Esophagus muscularis mucosa (tissue), 4 donors: ENCODE measurements at regions of chr5 and their contacts with region 1.

Region 1: GRCh38 chr5:82641331-82642003 is 363.3 kb upstream of the RPS23 start:
- DNase-seq: peak; percentile 93
- H3K4me3 ChIP-seq: no peak overlapping the region
- H3K27ac ChIP-seq: peak overlapping the region in 1 of 4 donors; percentile 6
- H3K4me1 ChIP-seq: peaks cover 0 to 28% (median 26%) of the 10 kb centered on the region in 4 donors
- H3K27me3 ChIP-seq: no peaks in the 10 kb centered on the region
- CTCF ChIP-seq: peak; percentile 64 to 78 (median 72)
- EP300 ChIP-seq: no peak
- POLR2A ChIP-seq: no peak

Region 2: DNA sequence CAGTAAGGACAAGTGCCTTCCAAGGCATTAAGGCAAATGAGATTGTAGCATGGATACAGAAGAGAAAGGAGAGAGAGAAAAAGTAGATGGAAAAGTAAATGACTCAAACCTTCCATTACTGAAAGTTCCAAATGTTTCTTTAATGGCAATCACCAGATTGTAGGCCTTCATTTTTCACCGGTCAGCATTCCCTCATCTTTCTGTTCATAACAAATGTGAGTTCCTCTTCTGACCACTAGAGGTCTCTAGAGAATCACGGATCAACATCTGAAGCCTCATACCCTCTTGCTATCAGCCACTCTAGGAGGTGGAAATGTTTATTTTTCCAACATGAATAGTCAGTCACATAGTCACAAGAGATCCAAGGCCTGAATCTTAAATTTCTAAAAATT is 289.7 kb before region 1 on chr5:
- intact Hi-C with region 1: loop called (anchors 5 kb)
- DNase-seq: no peak
- H3K4me3 ChIP-seq: no peak overlapping the region
- H3K27ac ChIP-seq: peak overlapping the region in 2 of 4 donors; percentile 27 to 32
- H3K4me1 ChIP-seq: peaks cover 20 to 38% (median 25%) of the 10 kb centered on the region in 4 donors
- H3K27me3 ChIP-seq: no peaks in the 10 kb centered on the region
- CTCF ChIP-seq: peak; percentile 65 to 82 (median 73)
- EP300 ChIP-seq: no peak
- POLR2A ChIP-seq: no peak

Region 3: GRCh38 chr5:82793808-82794419 is 152.4 kb after region 1 on chr5:
- intact Hi-C with region 1: loop called (anchors 5 kb)
- DNase-seq: no peak
- H3K4me3 ChIP-seq: no peak overlapping the region
- H3K27ac ChIP-seq: no peak overlapping the region
- H3K4me1 ChIP-seq: no peaks in the 10 kb centered on the region
- H3K27me3 ChIP-seq: no peaks in the 10 kb centered on the region
- CTCF ChIP-seq: peak; percentile 28 to 69 (median 48)
- EP300 ChIP-seq: no peak
- POLR2A ChIP-seq: no peak

Region 4: GRCh38 chr5:83000428-83000827 is 359.0 kb after region 1 on chr5:
- intact Hi-C with region 1: no loop called
- DNase-seq: no peak
- H3K4me3 ChIP-seq: no peak overlapping the region
- H3K27ac ChIP-seq: no peak overlapping the region
- H3K4me1 ChIP-seq: no peaks in the 10 kb centered on the region
- H3K27me3 ChIP-seq: no peaks in the 10 kb centered on the region
- CTCF ChIP-seq: no peak
- EP300 ChIP-seq: no peak
- POLR2A ChIP-seq: no peak

Region 5: DNA sequence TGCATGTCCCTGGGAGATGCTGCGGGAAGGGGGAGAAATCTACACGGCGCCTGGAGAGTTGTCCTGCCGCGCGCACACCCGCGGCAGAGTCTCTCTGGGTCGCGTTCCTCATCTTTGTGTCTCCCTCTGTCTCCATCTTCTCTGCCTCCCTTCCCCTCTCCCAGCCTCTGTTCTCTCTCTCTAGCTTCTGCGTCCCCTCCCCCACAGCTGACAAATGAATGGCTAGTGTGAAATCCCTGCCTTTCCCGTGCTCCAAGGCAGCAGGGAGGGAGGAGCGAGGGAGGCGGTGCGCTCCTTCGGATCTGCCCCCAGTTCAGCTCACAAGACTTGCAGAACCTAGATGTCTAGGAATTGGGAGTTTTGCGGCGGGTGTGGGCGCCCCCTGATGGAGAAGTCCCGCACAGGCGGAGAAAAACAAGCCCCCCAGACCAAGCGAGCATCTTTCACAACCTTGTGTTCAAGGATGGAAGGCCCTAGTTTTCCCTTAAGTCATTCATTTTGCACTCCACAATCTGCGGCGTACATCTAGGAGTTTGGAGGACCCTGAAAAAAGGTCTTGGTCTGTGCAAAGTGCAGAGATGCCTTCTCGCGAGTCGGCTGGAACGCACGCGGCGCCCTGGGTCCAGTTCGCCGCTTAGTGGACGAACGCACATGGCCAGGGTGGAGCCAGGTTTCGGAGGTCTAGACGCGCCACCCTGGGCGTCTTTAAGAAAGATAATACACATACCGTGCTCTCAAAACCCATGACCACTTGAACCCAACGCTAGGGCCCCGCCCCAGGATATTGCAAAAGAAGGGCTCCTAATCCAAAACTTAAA is 832.1 kb after region 1 on chr5:
- intact Hi-C with region 1: loop called (anchors 5 kb)
- DNase-seq: peak; percentile 98
- H3K4me3 ChIP-seq: peak overlapping the region; percentile 51 to 58 (median 54)
- H3K27ac ChIP-seq: peak overlapping the region; percentile 66 to 78 (median 70)
- H3K4me1 ChIP-seq: peaks cover 27 to 46% (median 41%) of the 10 kb centered on the region in 4 donors
- H3K27me3 ChIP-seq: peaks cover 0 to 74% (median 23%) of the 10 kb centered on the region in 4 donors
- CTCF ChIP-seq: peak; percentile 59 to 70 (median 63)
- EP300 ChIP-seq: no peak
- POLR2A ChIP-seq: no peak

Region 6: DNA sequence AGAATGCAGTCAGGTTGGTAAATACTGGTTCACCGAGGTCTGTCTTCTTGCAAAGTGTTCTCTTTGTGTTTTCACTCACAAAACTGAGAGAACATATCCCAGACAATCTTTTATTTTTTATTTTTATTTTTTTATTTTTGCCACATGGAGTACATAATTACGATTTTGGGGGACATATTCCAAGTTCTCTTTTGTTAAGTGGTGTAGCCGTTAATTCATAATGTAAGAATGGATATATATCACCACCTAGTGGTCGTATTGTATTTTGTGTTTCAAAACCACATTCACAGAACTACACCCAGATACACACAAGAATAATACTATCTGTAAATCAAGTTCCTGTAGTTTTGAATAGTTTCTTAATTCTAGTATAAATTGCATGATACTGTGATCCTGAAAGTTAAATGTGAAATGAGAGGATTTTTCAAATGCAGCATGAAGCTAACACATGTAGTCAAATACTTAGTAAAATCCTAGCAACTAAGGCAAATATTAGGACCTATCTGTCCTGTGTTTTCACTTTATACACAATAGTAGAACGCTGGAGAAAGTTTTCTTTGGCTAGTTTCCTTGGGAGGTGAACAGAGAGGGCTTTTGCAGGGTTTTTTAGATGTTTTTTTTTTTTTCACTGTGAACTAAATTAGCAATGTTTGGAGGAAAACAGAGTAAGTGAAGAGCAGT is 922.7 kb after region 1 on chr5:
- intact Hi-C with region 1: loop called (anchors 10 kb)
- DNase-seq: no peak
- H3K4me3 ChIP-seq: no peak overlapping the region
- H3K27ac ChIP-seq: no peak overlapping the region
- H3K4me1 ChIP-seq: peaks cover 0 to 11% (median 0%) of the 10 kb centered on the region in 4 donors
- H3K27me3 ChIP-seq: no peaks in the 10 kb centered on the region
- CTCF ChIP-seq: peak; percentile 50 to 64 (median 60)
- EP300 ChIP-seq: no peak
- POLR2A ChIP-seq: no peak